HepG2 (cell line): ENCODE measurements at regions of chr20 and their contacts with region 1.

Region 1: DNA sequence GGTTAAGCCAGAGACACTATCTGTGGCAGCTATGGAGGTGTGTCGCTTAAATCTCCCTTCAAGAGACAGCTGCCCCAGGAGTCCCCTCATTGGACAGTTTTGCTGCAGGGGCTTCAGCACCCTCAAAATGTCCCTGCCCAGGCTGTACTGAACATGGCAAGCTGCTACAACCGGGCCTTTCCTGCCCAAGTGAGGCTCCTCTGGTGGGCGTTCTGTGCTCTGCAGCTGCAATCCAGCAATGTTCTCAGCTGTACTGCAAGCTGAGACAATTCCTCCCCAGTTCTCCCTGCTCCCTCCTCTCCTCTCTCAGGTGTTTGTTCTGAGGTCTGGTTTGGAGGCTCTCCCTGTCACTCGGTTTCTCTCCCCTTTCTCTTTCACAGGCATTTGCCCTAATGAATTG is 190.8 kb upstream of the LAMP5 start:
- DNase-seq: peak; percentile 29
- ATAC-seq: peak; percentile 100
- H3K4me3 ChIP-seq: no peak overlapping the region
- H3K27ac ChIP-seq: no peak overlapping the region
- H3K4me1 ChIP-seq: no peaks in the 10 kb centered on the region
- H3K27me3 ChIP-seq: no peaks in the 10 kb centered on the region; a peak in 1 of 5 replicates
- CTCF ChIP-seq: peak; percentile 55
- EP300 ChIP-seq: no peak
- POLR2A ChIP-seq: no peak
- RAD21 ChIP-seq: peak; percentile 17; the same call in 1 of the 2 replicates

Region 2: GRCh38 chr20:9215539-9215938 is 108.1 kb before region 1 on chr20:
- CTCF ChIA-PET with region 1: interaction called, 3 read pairs
- POLR2A ChIA-PET with region 1: no interaction called
- in situ Hi-C with region 1: no loop called
- intact Hi-C with region 1: loop called (anchors 10 kb)
- DNase-seq: peak; percentile 41
- ATAC-seq: peak; percentile 78
- H3K4me3 ChIP-seq: no peak overlapping the region
- H3K27ac ChIP-seq: no peak overlapping the region
- H3K4me1 ChIP-seq: no peaks in the 10 kb centered on the region
- H3K27me3 ChIP-seq: peaks cover 0 to 14% of the 10 kb centered on the region in 2 experiments; a peak in 2 of 5 replicates
- CTCF ChIP-seq: peak; percentile 47
- EP300 ChIP-seq: no peak
- POLR2A ChIP-seq: no peak
- RAD21 ChIP-seq: peak; percentile 35; the same call in 1 of the 2 replicates